MCF 10A (cell line): ENCODE measurements at regions of chr20 and their contacts with region 1.

Region 1: GRCh38 chr20:59571551-59572314 is 32.6 kb upstream of the PHACTR3 start:
- DNase-seq: peak; percentile 46
- H3K4me3 Mint-ChIP-seq: no peak overlapping the region
- H3K27ac Mint-ChIP-seq: no peak overlapping the region
- H3K4me1 Mint-ChIP-seq: no peaks in the 10 kb centered on the region
- H3K27me3 Mint-ChIP-seq: peaks cover 47% of the 10 kb centered on the region
- CTCF ChIP-seq: peak; percentile 93

Region 2: DNA sequence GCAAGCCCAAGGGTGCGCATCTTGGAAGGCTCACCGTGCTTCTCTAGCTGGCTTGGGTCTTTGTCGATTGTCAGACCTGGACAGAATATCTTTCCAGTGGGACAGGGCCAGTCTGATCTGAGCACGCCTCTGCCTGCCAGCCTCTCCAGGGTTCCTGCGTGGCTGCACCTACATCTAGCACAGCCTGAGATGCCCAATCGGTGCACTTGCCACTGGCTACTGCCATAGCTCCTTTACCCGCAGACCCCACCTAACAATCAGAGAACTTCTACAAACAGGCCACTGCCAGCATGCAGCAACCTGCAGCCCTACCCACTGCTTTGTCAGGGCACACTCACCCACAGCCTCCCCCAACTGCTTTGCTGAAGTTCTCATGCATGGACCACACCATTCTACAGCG is 24.1 kb before region 1 on chr20:
- CTCF ChIA-PET with region 1: interaction called, 30 read pairs
- POLR2A ChIA-PET with region 1: no interaction called
- intact Hi-C with region 1: no loop called
- DNase-seq: no peak
- H3K4me3 Mint-ChIP-seq: no peak overlapping the region
- H3K27ac Mint-ChIP-seq: no peak overlapping the region
- H3K4me1 Mint-ChIP-seq: no peaks in the 10 kb centered on the region
- H3K27me3 Mint-ChIP-seq: peaks cover 83% of the 10 kb centered on the region
- CTCF ChIP-seq: no peak

Region 3: DNA sequence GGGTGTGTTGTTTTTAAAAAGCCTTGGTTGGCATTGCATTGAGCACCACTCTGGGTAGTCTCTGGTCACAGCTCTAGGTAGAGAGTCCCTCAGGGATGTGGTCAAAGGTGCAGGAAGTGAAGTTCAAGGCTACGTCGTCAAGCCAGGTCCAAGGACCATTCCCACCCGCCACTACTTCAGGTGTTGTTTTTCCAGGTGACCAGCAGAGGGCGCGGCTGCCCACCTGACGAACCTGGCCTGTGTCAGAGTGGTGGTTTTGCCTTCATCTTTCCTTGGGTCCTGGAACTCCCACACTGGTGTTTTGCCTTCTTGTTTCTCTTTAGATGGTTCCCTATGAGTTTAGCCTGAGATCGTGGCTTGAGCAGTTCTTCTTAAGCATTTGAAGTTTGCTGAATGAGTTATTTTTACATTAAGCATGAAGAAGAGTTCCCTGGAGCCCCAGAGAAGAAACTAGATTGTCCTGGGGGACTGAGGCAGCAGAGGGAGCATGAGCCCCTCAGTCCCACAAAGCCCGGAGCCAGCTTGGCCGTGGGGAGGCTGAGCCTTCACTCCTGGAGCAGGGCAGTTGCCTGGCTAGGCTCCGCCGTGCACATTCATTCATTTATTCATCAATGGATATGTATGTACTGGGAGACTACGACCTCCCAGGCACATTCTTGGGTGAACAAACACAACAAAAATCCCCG is 27.0 kb after region 1 on chr20:
- CTCF ChIA-PET with region 1: interaction called, 91 read pairs
- POLR2A ChIA-PET with region 1: no interaction called
- intact Hi-C with region 1: no loop called
- DNase-seq: peak; percentile 53
- H3K4me3 Mint-ChIP-seq: no peak overlapping the region
- H3K27ac Mint-ChIP-seq: no peak overlapping the region
- H3K4me1 Mint-ChIP-seq: no peaks in the 10 kb centered on the region
- H3K27me3 Mint-ChIP-seq: peaks cover 100% of the 10 kb centered on the region
- CTCF ChIP-seq: peak; percentile 79

Region 4: DNA sequence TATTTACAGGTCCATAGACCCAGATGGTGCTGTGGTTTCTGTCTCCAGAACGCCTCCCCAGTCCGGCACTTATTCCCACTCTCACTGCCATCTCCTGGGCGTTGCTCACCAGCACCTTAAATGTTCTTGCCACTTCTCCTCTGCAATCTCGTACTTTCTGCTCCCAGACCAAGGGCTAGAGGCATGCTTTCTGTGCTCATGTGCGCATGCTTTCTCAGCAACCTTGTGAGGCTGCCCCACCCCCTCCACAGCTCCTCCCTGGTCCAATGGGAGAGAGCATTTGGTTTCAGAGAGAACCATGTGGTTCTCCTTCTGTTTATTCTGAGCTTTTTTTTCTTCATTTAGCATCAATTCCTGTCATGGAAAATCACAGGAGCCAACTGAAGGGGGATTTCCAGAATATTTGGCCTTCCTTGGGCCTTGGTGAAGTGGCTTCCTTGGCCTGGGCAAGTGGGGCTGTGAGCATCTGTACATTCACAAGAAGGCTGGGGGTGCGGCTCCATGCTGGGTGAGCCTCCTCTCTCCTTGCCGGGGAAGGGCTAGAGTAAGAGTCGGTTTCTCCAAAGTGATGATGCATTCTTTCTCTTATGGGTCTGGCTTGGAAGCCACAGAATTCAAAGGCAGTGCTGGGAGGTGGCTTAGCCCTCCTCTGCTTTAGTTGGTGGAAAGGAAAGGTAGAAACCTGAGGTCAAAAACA is 99.2 kb after region 1 on chr20:
- CTCF ChIA-PET with region 1: interaction called, 10 read pairs
- POLR2A ChIA-PET with region 1: no interaction called
- intact Hi-C with region 1: no loop called
- DNase-seq: no peak
- H3K4me3 Mint-ChIP-seq: no peak overlapping the region
- H3K27ac Mint-ChIP-seq: no peak overlapping the region
- H3K4me1 Mint-ChIP-seq: no peaks in the 10 kb centered on the region
- H3K27me3 Mint-ChIP-seq: peaks cover 86% of the 10 kb centered on the region
- CTCF ChIP-seq: no peak

Region 5: GRCh38 chr20:59751056-59751688 is 179.4 kb after region 1 on chr20:
- CTCF ChIA-PET with region 1: interaction called, 54 read pairs
- POLR2A ChIA-PET with region 1: no interaction called
- intact Hi-C with region 1: loop called (anchors 1 kb)
- DNase-seq: peak; percentile 56
- H3K4me3 Mint-ChIP-seq: no peak overlapping the region
- H3K27ac Mint-ChIP-seq: no peak overlapping the region
- H3K4me1 Mint-ChIP-seq: no peaks in the 10 kb centered on the region
- H3K27me3 Mint-ChIP-seq: peaks cover 98% of the 10 kb centered on the region
- CTCF ChIP-seq: peak; percentile 88